ENCODE measurements at regions of chr10 and their contacts with region 1.

Region 1: GRCh38 chr10:11602919-11603523 is 8.4 kb downstream of the USP6NL start:
- DNase-seq: peak; percentile 91
- ATAC-seq: peak; percentile 76
- H3K4me3 ChIP-seq: peak overlapping the region; percentile 2 to 36 (median 20); a peak in 3 of 6 replicates
- H3K27ac ChIP-seq: peak overlapping the region; percentile 72
- H3K4me1 ChIP-seq: peaks cover 92% of the 10 kb centered on the region
- H3K27me3 ChIP-seq: no peaks in the 10 kb centered on the region
- CTCF ChIP-seq: no peak
- EP300 ChIP-seq: peak; percentile 29 to 90; a peak in 3 of 4 replicates
- POLR2A ChIP-seq: no peak
- RAD21 ChIP-seq: no peak

Region 2: GRCh38 chr10:11472158-11472753 is 130.8 kb before region 1 on chr10:
- CTCF ChIA-PET with region 1: no interaction called
- POLR2A ChIA-PET with region 1: no interaction called
- in situ Hi-C with region 1: no loop called
- intact Hi-C with region 1: no loop called
- DNase-seq: peak; percentile 44
- ATAC-seq: peak; percentile 97
- H3K4me3 ChIP-seq: no peak overlapping the region
- H3K27ac ChIP-seq: no peak overlapping the region
- H3K4me1 ChIP-seq: no peaks in the 10 kb centered on the region
- H3K27me3 ChIP-seq: no peaks in the 10 kb centered on the region
- CTCF ChIP-seq: peak; percentile 85
- EP300 ChIP-seq: no peak
- POLR2A ChIP-seq: no peak
- RAD21 ChIP-seq: peak; percentile 65

Region 3: DNA sequence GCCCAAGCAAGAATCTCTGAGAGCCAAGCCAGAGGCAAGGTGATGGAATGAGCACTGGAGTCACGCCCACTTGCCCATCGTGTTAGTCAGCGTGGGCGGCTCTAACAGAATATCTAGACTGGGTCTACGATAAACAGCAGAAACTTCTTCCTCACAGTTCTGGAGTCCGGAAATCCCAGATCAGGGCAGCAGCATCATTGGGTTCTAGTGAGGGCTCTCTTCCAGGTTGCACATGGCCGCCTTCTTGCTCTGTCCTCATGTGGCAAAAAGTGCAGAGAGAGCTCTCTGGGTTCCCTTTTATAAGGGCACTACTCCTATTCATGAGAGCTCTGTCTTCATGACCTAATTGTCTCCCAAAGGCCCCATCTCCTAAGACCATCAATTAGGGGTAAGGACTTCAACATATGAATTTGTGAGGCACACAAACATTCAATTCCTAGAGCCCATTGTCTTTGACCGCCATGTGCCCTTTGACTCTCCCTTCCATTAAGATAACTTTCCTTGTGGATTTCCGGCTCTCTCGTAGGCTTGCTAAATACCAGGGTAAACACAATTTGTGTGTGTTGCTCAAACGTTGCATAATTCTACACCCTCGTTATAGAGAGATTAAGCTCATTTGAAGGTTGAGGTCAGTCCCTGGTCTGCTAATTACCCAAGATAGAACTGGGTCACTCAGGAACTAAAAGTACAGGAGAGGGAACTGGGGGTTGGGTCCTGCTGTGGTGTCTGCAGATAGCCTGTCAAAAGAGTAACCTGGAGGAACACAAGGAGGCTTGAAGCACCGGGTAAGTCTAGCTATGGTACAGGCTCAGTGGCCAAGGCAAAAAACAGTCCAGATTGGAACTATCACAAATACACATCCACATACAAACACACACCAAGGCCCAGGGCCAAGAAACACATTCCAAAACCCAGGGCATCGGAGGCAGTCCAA is 37.1 kb after region 1 on chr10:
- CTCF ChIA-PET with region 1: no interaction called
- POLR2A ChIA-PET with region 1: no interaction called
- in situ Hi-C with region 1: no loop called
- intact Hi-C with region 1: no loop called
- DNase-seq: peak; percentile 96
- ATAC-seq: peak; percentile 92
- H3K4me3 ChIP-seq: peak overlapping the region in 1 of 3 experiments; percentile 22; a peak in 1 of 6 replicates
- H3K27ac ChIP-seq: no peak overlapping the region
- H3K4me1 ChIP-seq: peaks cover 18% of the 10 kb centered on the region
- H3K27me3 ChIP-seq: peaks cover 2 to 16% of the 10 kb centered on the region in 2 experiments; a peak in 3 of 5 replicates
- CTCF ChIP-seq: no peak
- EP300 ChIP-seq: peak; percentile 80 to 98
- POLR2A ChIP-seq: no peak
- RAD21 ChIP-seq: no peak

Region 4: GRCh38 chr10:11823122-11823988 is 220.3 kb after region 1 on chr10 and contains the start of gene PROSER2:
- CTCF ChIA-PET with region 1: no interaction called
- POLR2A ChIA-PET with region 1: no interaction called
- in situ Hi-C with region 1: no loop called
- intact Hi-C with region 1: loop called (anchors 10 kb)
- DNase-seq: no peak
- ATAC-seq: peak; percentile 89
- H3K4me3 ChIP-seq: peak within 1 kb of the TSS; percentile 90 to 98 (median 97)
- H3K27ac ChIP-seq: peak within 1 kb of the TSS; percentile 53
- H3K4me1 ChIP-seq: peaks cover 55% of the 10 kb centered on the region
- H3K27me3 ChIP-seq: no peaks in the 10 kb centered on the region
- CTCF ChIP-seq: no peak; the same call in 1 of the 2 replicates
- EP300 ChIP-seq: no peak
- POLR2A ChIP-seq: peak; percentile 38 to 83; a peak in 3 of 4 replicates
- RAD21 ChIP-seq: no peak; the same call in none of the 2 replicates
- total RNA-seq, gene PROSER2: 6.7 and 6.9 TPM in 2 replicates

Measured in HepG2 (cell line).